Stomach (tissue), 19 donors: ENCODE measurements at regions of chr14 and their contacts with region 1.

Region 1: GRCh38 chr14:93939304-93940229 is 12.4 kb downstream of the FAM181A start:
- DNase-seq: peak; percentile 84 to 93
- H3K4me3 ChIP-seq: peak overlapping the region; percentile 33 to 51 (median 43)
- H3K27ac ChIP-seq: peak overlapping the region in 3 of 5 donors; percentile 20 to 72 (median 63)
- H3K4me1 ChIP-seq: peaks cover 7 to 46% (median 28%) of the 10 kb centered on the region in 4 donors
- H3K27me3 ChIP-seq: peaks cover 0 to 35% (median 12%) of the 10 kb centered on the region in 3 donors
- CTCF ChIP-seq: peak in 5 of 7 experiments; percentile 40 to 92 (median 74)
- EP300 ChIP-seq: no peak
- POLR2A ChIP-seq: no peak

Region 2: GRCh38 chr14:93533472-93534241 is 405.9 kb before region 1 on chr14:
- intact Hi-C with region 1: no loop called
- DNase-seq: peak in 1 of 2 donors; percentile 13
- H3K4me3 ChIP-seq: no peak overlapping the region
- H3K27ac ChIP-seq: no peak overlapping the region
- H3K4me1 ChIP-seq: no peaks in the 10 kb centered on the region
- H3K27me3 ChIP-seq: peaks cover 0 to 4% (median 0%) of the 10 kb centered on the region in 3 donors
- CTCF ChIP-seq: no peak
- EP300 ChIP-seq: no peak
- POLR2A ChIP-seq: no peak

Region 3: GRCh38 chr14:93759719-93760307 is 179.8 kb before region 1 on chr14:
- intact Hi-C with region 1: no loop called
- DNase-seq: peak in 1 of 2 donors; percentile 75
- H3K4me3 ChIP-seq: no peak overlapping the region
- H3K27ac ChIP-seq: peak overlapping the region in 4 of 5 donors; percentile 30 to 87 (median 49)
- H3K4me1 ChIP-seq: peaks cover 3 to 57% (median 19%) of the 10 kb centered on the region in 4 donors
- H3K27me3 ChIP-seq: no peaks in the 10 kb centered on the region
- CTCF ChIP-seq: no peak
- EP300 ChIP-seq: peak; percentile 61
- POLR2A ChIP-seq: no peak

Region 4: DNA sequence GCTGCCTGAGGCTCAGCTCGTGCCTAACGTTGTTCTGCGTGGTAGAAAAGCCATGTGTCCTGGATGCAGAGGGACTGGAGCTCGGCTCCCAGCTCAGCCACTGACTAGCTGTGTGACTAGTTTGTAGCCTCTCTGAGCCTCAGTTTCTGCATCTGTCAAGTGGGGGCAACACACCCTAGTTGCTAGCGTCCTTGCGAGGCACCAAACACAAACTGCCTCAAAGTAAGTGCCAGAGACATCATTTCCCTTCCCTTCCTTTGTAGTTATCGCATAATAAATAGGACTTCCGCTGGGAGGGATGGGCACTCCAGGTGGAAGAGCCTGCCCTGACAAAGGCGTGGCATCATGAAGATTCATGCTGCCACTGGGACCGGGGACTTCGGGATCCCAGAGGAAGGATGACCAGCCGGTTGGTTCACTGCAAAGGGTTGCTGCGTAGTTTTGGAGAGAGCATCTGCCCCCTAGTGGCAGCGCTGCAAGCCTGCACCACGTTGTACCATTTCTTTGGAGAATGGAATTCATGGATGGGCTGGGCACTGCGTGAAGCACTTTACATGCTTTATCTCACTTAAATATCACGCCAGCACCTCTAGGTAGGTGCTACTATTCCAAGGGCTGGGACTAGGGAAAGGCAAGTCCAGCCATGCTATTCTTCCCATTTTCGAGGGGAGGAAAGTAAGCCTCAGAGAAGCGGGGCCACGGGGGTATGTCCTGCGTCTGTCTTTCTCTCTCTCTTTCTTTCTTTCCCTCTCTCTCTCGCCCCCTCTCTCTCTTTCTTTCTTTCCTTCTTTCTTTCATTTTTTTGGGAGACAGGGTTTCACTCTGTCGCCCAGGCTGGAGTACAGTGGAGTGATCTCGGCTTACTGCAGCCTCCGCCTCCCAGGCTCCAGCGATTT is 62.2 kb after region 1 on chr14:
- intact Hi-C with region 1: loop called (anchors 5 kb)
- DNase-seq: peak; percentile 55 to 89
- H3K4me3 ChIP-seq: no peak overlapping the region
- H3K27ac ChIP-seq: no peak overlapping the region
- H3K4me1 ChIP-seq: peaks cover 0 to 16% (median 8%) of the 10 kb centered on the region in 4 donors
- H3K27me3 ChIP-seq: peaks cover 0 to 28% (median 6%) of the 10 kb centered on the region in 3 donors
- CTCF ChIP-seq: peak in 5 of 7 experiments; percentile 77 to 98 (median 94)
- EP300 ChIP-seq: no peak
- POLR2A ChIP-seq: no peak